Panc1 (cell line): ENCODE measurements at regions of chr7 and their contacts with region 1.

Region 1: GRCh38 chr7:68720697-68721096 is 877.6 kb upstream of the AUTS2 start:
- DNase-seq: no peak
- ATAC-seq: no peak
- H3K4me3 ChIP-seq: no peak overlapping the region
- H3K27ac ChIP-seq: no peak overlapping the region
- H3K4me1 ChIP-seq: no peaks in the 10 kb centered on the region
- H3K27me3 ChIP-seq: no peaks in the 10 kb centered on the region
- CTCF ChIP-seq: no peak

Region 2: GRCh38 chr7:67387851-67388250 is 1332.8 kb before region 1 on chr7:
- CTCF ChIA-PET with region 1: interaction called, 12 read pairs
- POLR2A ChIA-PET with region 1: no interaction called
- in situ Hi-C with region 1: no loop called
- intact Hi-C with region 1: no loop called
- DNase-seq: no peak
- ATAC-seq: no peak
- H3K4me3 ChIP-seq: no peak overlapping the region
- H3K27ac ChIP-seq: no peak overlapping the region
- H3K4me1 ChIP-seq: no peaks in the 10 kb centered on the region
- H3K27me3 ChIP-seq: peaks cover 2% of the 10 kb centered on the region; the same call in 1 of the 2 replicates
- CTCF ChIP-seq: no peak

Region 3: GRCh38 chr7:67992287-67992686 is 728.4 kb before region 1 on chr7:
- CTCF ChIA-PET with region 1: no interaction called
- POLR2A ChIA-PET with region 1: no interaction called
- in situ Hi-C with region 1: no loop called
- intact Hi-C with region 1: no loop called
- DNase-seq: no peak
- ATAC-seq: no peak
- H3K4me3 ChIP-seq: no peak overlapping the region
- H3K27ac ChIP-seq: no peak overlapping the region
- H3K4me1 ChIP-seq: no peaks in the 10 kb centered on the region
- H3K27me3 ChIP-seq: no peaks in the 10 kb centered on the region
- CTCF ChIP-seq: no peak

Region 4: DNA sequence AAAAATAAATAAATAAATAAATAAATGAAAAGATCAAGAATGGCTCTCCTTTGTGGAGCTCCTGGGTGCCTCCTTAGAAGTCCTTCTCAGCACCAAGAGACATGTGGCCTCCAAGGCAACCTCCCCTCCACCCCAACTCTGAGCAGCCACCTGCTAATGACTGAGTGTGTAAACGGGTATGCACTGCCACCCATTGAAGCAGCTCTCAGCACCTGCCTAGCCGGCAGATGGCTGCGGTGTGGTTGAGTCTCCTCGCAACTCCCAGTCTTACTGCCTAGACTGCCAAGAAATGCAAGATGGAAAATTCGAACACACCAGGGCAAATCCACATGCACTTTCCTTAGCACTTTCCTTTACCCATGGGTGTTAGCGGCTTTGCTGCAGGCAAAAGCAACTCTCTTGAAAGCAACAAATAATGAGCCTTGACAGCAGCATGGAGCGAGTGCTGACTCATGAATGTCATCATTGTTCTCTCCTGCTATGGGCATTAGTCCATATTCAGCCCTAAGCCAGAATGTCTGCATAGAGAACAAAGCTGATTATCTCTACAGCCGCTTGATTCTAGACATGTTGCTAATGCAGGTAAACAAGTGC is 36.4 kb before region 1 on chr7:
- CTCF ChIA-PET with region 1: no interaction called
- POLR2A ChIA-PET with region 1: no interaction called
- in situ Hi-C with region 1: no loop called
- intact Hi-C with region 1: no loop called
- DNase-seq: no peak
- ATAC-seq: no peak
- H3K4me3 ChIP-seq: no peak overlapping the region
- H3K27ac ChIP-seq: no peak overlapping the region
- H3K4me1 ChIP-seq: no peaks in the 10 kb centered on the region
- H3K27me3 ChIP-seq: no peaks in the 10 kb centered on the region
- CTCF ChIP-seq: no peak

Region 5: GRCh38 chr7:69232445-69233376 is 512.0 kb after region 1 on chr7:
- CTCF ChIA-PET with region 1: interaction called, 10 read pairs
- POLR2A ChIA-PET with region 1: no interaction called
- in situ Hi-C with region 1: no loop called
- intact Hi-C with region 1: no loop called
- DNase-seq: no peak
- ATAC-seq: no peak
- H3K4me3 ChIP-seq: no peak overlapping the region
- H3K27ac ChIP-seq: no peak overlapping the region
- H3K4me1 ChIP-seq: no peaks in the 10 kb centered on the region
- H3K27me3 ChIP-seq: no peaks in the 10 kb centered on the region
- CTCF ChIP-seq: no peak